GM10248 (cell line): ENCODE measurements at regions of chr2 and their contacts with region 1.

Region 1: DNA sequence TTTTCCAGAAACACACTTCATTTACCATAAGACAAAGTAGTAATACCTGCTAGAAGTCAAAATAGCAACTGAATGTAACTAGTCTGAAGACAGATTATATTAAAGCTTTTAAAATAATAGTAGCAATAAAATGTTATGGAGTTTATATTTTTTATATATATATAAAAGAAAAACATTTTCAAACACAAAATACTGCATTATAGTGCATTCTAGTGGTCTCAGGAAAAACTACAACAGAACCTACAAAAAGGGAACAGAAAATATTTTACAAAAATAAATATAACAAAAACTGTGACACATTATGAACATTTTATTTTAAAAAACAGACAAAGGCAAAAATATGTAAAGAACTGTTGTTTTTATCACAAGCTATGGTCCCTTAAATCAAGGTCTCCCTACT is 48.0 kb downstream of the STRN start:
- DNase-seq: no peak
- CTCF ChIP-seq: peak; percentile 24

Region 2: DNA sequence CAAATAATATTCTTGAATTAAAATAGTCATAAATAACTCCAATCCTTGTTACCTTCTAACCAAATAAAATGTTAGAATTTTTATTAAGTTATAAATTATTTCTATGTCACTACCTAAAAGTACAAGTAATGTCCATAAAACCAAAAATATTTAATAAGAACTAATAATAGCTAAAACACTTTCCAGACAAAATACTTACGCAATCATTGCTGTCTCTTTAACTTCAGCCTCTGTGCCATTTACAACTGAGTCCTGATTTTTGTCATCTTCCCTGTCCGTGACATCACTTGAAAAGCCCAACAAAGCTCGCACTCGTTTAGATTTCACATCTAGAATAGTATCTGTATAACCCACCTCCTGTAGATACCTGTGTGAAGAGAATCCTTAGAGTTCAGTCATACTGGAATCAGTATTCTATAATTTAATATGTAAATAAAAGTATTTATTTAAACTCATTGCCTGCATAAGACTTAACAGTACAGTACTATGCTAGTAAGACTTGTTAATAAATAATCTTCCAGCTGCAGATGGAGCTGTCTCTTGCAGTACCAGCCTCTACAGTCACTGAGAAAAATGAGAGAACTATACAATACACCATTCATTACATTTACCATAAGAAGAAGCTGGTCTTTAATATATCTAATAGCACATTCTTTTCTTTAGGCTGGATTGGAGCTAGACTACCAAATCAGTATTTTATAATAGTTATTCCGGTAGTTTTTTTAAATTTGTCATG is 15.8 kb before region 1 on chr2:
- CTCF ChIA-PET with region 1: interaction called, 14 read pairs
- POLR2A ChIA-PET with region 1: no interaction called
- DNase-seq: no peak
- CTCF ChIP-seq: no peak